Activated CD4-positive, alpha-beta memory T cell treated with anti-CD3 and anti-CD28 coated beads for 36 hours (primary cell): ENCODE measurements at regions of chr19 and their contacts with region 1.

Region 1: DNA sequence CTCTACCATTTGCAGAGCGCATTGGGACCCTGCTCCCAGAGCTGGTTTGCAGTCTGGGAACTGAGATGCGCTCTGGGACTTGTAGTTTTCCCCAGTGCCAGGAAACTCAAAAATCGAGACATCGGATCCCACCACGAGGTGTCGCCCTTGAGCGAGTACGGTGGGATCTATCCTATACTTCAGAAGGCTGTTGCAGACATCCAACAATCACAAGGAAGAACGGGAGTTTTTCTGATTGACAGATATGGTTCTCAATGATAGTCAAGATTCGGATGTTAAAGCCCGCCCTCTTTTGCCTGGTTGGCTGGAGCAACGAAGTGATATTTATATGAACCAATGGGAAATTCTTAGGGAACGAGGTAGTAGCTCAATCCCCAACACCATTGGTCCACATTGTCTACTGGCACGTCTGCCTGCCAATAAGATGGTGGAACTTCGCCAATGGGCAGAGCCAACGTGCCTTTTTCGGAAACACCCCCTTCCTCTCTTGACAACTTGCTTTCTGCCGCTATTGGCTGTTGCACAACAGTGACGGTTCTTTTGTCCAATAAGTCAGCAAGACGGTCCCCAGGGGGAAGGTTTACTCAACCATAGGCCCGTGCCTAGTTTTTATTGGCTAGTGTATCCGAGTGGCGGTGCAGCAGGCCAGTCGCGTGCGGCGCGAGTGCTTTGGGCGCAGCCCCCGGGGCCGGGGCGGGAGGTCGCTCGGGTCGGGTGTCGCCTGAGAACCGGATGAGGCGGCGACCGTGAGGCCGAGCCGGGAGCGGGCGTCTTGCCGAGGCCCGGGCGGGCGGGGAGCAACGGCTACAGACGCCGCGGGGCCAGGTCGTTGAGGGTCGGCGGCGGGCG is at the start of gene DNM2:
- DNase-seq: peak; percentile 99
- H3K4me3 Mint-ChIP-seq: peak within 1 kb of the TSS; percentile 95
- H3K27ac Mint-ChIP-seq: peak within 1 kb of the TSS; percentile 85
- H3K4me1 Mint-ChIP-seq: peaks cover 30% of the 10 kb centered on the region
- H3K27me3 Mint-ChIP-seq: no peaks in the 10 kb centered on the region
- total RNA-seq, gene DNM2: 171 to 173 TPM

Region 2: GRCh38 chr19:10551698-10552301 is 165.8 kb before region 1 on chr19:
- CTCF ChIA-PET with region 1: no interaction called
- POLR2A ChIA-PET with region 1: no interaction called
- intact Hi-C with region 1: no loop called
- DNase-seq: peak; percentile 67
- H3K4me3 Mint-ChIP-seq: no peak overlapping the region
- H3K27ac Mint-ChIP-seq: no peak overlapping the region
- H3K4me1 Mint-ChIP-seq: peaks cover 33% of the 10 kb centered on the region
- H3K27me3 Mint-ChIP-seq: no peaks in the 10 kb centered on the region

Region 3: GRCh38 chr19:10701955-10702525 is 15.5 kb before region 1 on chr19:
- CTCF ChIA-PET with region 1: interaction called, 41 read pairs
- POLR2A ChIA-PET with region 1: interaction called, 13 read pairs
- intact Hi-C with region 1: no loop called
- DNase-seq: peak; percentile 47
- H3K4me3 Mint-ChIP-seq: peak overlapping the region; percentile 88
- H3K27ac Mint-ChIP-seq: peak overlapping the region; percentile 54
- H3K4me1 Mint-ChIP-seq: peaks cover 7% of the 10 kb centered on the region
- H3K27me3 Mint-ChIP-seq: peaks cover 3% of the 10 kb centered on the region

Region 4: DNA sequence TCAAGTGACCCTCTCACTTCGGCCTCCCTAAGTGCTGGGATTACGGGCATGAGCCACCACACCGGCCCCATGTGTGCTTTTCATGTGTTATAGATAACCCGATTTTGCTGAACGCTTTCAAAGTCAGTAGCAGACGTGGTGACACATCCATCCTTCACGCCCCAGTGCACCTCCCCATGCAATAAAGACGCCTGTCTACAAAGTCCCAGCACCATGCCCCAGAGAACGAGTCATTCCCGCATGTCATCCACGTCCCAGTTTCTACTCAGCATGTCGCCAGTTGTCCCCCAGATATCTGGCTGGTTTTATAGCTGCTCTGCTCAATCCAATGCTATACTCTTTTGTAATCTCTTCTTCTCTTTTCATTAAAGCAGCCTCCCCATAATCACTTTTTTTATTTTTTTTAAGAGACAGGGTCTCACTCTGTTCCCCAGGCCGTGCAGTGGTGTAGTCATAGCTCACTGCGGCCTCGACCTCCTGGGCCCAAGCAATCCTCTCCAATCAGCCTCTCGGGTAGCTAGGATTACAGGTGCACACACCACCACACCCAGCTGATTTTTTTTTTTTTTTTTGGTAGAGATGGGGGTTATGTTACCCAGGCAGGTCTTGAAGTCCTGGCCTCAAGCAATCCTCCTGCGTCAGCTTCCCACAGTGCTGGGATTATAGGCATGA is 42.8 kb after region 1 on chr19:
- CTCF ChIA-PET with region 1: interaction called, 29 read pairs
- POLR2A ChIA-PET with region 1: interaction called, 3 read pairs
- intact Hi-C with region 1: loop called (anchors 1 kb)
- DNase-seq: peak; percentile 71
- H3K4me3 Mint-ChIP-seq: peak overlapping the region; percentile 71
- H3K27ac Mint-ChIP-seq: peak overlapping the region; percentile 86
- H3K4me1 Mint-ChIP-seq: peaks cover 83% of the 10 kb centered on the region
- H3K27me3 Mint-ChIP-seq: no peaks in the 10 kb centered on the region

Region 5: GRCh38 chr19:10805065-10805757 is 87.6 kb after region 1 on chr19:
- CTCF ChIA-PET with region 1: interaction called, 12 read pairs
- POLR2A ChIA-PET with region 1: interaction called, 3 read pairs
- intact Hi-C with region 1: no loop called
- DNase-seq: no peak
- H3K4me3 Mint-ChIP-seq: no peak overlapping the region
- H3K27ac Mint-ChIP-seq: peak overlapping the region; percentile 30
- H3K4me1 Mint-ChIP-seq: peaks cover 15% of the 10 kb centered on the region
- H3K27me3 Mint-ChIP-seq: no peaks in the 10 kb centered on the region

Region 6: GRCh38 chr19:10835754-10836477 is 118.3 kb after region 1 on chr19 and contains the start of gene TMED1:
- CTCF ChIA-PET with region 1: interaction called, 38 read pairs
- POLR2A ChIA-PET with region 1: interaction called, 5 read pairs
- intact Hi-C with region 1: loop called (anchors 1 kb)
- DNase-seq: peak; percentile 98
- H3K4me3 Mint-ChIP-seq: peak within 1 kb of the TSS; percentile 94
- H3K27ac Mint-ChIP-seq: peak within 1 kb of the TSS; percentile 99
- H3K4me1 Mint-ChIP-seq: peaks cover 15% of the 10 kb centered on the region
- H3K27me3 Mint-ChIP-seq: no peaks in the 10 kb centered on the region
- total RNA-seq, gene TMED1: 18.8 to 19.1 TPM

Region 7: GRCh38 chr19:10870955-10871603 is 153.5 kb after region 1 on chr19 and contains the start of gene CARM1:
- CTCF ChIA-PET with region 1: interaction called, 208 read pairs
- POLR2A ChIA-PET with region 1: no interaction called
- intact Hi-C with region 1: no loop called
- DNase-seq: peak; percentile 99
- H3K4me3 Mint-ChIP-seq: peak within 1 kb of the TSS; percentile 79
- H3K27ac Mint-ChIP-seq: peak within 1 kb of the TSS; percentile 96
- H3K4me1 Mint-ChIP-seq: peaks cover 25% of the 10 kb centered on the region
- H3K27me3 Mint-ChIP-seq: no peaks in the 10 kb centered on the region
- total RNA-seq, gene CARM1: 75.0 to 78.3 TPM